ENCODE measurements at regions of chr18 and their contacts with region 1.

Region 1: GRCh38 chr18:23629444-23629946 is 33.2 kb downstream of the ANKRD29 start:
- DNase-seq: no peak
- H3K4me3 ChIP-seq: no peak overlapping the region
- H3K27ac ChIP-seq: no peak overlapping the region
- H3K4me1 ChIP-seq: peaks cover 15% of the 10 kb centered on the region
- H3K27me3 ChIP-seq: no peaks in the 10 kb centered on the region
- CTCF ChIP-seq: no peak
- POLR2A ChIP-seq: no peak

Region 2: GRCh38 chr18:23377669-23378301 is 251.7 kb before region 1 on chr18:
- intact Hi-C with region 1: no loop called
- DNase-seq: no peak
- H3K4me3 ChIP-seq: no peak overlapping the region
- H3K27ac ChIP-seq: peak overlapping the region; percentile 91
- H3K4me1 ChIP-seq: peaks cover 36% of the 10 kb centered on the region
- H3K27me3 ChIP-seq: no peaks in the 10 kb centered on the region
- CTCF ChIP-seq: no peak
- POLR2A ChIP-seq: no peak

Region 3: DNA sequence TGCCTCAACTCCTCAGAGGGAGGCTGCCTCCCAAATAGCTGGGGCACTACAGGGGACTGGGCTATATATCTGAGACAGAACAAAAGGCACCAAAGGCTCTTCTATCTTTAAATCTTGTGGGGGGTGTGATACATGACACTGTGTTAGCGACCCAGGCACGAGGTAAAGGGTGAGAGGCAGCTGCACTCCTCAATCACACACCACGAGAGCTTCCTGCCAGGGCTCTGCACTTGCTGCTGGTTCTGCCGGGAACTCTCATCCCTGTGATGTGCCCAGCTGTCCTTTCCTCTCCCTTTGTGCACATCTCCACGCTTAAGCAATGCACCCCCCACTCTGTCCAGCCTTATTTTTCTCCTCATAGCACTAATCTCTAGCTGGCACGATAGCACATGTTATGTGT is 75.6 kb before region 1 on chr18:
- intact Hi-C with region 1: no loop called
- DNase-seq: no peak
- H3K4me3 ChIP-seq: no peak overlapping the region
- H3K27ac ChIP-seq: no peak overlapping the region
- H3K4me1 ChIP-seq: no peaks in the 10 kb centered on the region
- H3K27me3 ChIP-seq: no peaks in the 10 kb centered on the region
- CTCF ChIP-seq: no peak
- POLR2A ChIP-seq: no peak

Region 4: GRCh38 chr18:23812546-23813440 is 183.3 kb after region 1 on chr18:
- intact Hi-C with region 1: loop called (anchors 10 kb)
- DNase-seq: no peak
- H3K4me3 ChIP-seq: no peak overlapping the region
- H3K27ac ChIP-seq: no peak overlapping the region
- H3K4me1 ChIP-seq: no peaks in the 10 kb centered on the region
- H3K27me3 ChIP-seq: no peaks in the 10 kb centered on the region
- CTCF ChIP-seq: peak; percentile 24 to 51 (median 33)
- POLR2A ChIP-seq: no peak